ENCODE measurements at regions of chr19 and their contacts with region 1.

Region 1: DNA sequence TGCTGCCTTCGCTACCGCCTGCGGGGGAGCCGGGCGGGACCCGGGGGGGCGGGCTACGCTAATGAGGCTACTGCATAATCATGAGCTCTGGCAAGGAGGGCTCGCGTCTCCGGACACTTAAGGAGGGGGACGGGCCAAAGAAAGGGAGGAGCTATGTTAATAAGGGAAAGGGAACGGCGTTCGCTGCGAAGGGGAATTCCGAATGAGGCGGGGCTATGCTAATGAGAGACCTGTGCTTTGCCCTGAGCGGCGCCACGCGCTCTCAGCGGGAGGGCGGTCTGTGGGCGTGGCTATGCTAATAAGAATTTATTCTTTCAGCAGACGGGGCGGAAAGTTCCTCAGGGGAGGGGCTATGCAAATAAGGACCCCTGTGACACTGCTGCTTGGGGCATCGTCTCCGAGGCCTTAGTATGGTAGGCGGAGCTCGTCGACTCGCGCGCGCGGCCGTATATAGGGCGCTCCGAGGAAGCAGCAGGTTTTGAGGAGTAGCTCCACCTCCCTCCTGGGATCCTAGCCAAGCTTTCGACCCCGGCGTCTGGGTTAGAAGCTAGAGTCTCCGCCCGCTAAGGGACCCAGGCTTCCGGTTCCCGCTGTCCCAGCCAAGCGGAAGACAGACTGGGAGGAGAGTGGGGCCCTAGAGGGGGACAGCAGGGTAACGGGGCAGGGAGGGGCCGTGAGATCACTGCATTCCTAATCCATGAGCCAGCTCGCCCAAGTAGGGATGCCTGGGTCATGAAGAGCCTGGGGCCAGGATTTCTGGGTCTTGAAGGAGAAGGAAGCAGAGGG is at the start of gene RRAS:
- DNase-seq: peak; percentile 96
- ATAC-seq: peak; percentile 73
- H3K4me3 Mint-ChIP-seq: peak within 1 kb of the TSS; percentile 94
- H3K27ac Mint-ChIP-seq: peak within 1 kb of the TSS; percentile 98
- H3K4me1 Mint-ChIP-seq: peaks cover 44% of the 10 kb centered on the region
- H3K27me3 Mint-ChIP-seq: peaks cover 18% of the 10 kb centered on the region
- total RNA-seq, gene RRAS: 12.3 to 14.9 TPM

Region 2: GRCh38 chr19:49580264-49581006 is 59.9 kb before region 1 on chr19 and contains the start of gene NOSIP:
- POLR2A ChIA-PET with region 1: interaction called, 13 read pairs
- DNase-seq: peak; percentile 93
- ATAC-seq: peak; percentile 91
- H3K4me3 Mint-ChIP-seq: peak within 1 kb of the TSS; percentile 88
- H3K27ac Mint-ChIP-seq: peak within 1 kb of the TSS; percentile 89
- H3K4me1 Mint-ChIP-seq: peaks cover 25% of the 10 kb centered on the region
- H3K27me3 Mint-ChIP-seq: no peaks in the 10 kb centered on the region
- total RNA-seq, gene NOSIP: 122 to 125 TPM

Region 3: DNA sequence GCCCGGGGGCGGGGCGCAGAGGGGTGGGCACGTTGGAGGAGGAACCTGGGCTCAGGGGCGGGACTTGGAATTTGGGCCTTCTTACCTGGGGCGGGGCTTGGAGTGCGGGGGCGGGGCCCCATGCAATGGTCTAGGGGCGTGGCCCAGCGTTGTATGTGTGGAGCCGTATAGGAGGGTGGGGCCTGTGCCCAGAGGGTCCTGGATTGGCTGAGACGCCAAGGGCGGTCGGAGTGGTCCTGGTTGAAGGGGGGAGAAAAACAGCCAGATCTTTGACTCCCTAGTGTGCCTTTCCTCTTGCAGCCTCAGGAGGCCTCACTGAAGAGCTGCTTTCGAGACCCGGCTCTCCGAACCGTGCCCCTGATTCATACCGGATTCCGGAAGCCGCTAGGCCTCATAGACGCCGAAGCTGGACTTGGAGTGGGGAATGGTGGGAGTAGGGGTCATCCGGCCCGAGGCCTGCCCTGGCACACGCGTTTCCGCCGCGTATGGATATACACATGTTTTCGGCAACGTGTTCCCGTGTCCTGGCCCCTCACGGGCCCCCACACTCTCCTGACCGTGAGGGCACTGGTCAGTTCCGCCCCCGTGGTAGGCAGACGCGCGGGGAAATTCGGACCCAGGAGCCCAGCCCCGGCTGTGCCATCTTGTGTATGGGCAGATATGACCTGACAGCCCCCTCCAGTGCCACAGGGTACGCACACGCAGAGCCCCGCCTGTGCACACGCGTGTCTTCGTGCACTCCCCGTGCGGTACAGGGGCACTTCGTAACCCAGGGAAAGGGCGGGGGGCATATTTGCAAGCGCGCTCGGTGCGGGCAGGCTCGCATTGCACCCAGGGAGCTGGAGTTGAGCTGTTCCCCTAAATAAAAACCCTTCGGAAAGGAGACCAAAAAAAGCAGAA is 50.0 kb before region 1 on chr19:
- POLR2A ChIA-PET with region 1: interaction called, 68 read pairs
- DNase-seq: peak; percentile 97
- ATAC-seq: peak; percentile 85
- H3K4me3 Mint-ChIP-seq: peak overlapping the region; percentile 91
- H3K27ac Mint-ChIP-seq: peak overlapping the region; percentile 88
- H3K4me1 Mint-ChIP-seq: peaks cover 30% of the 10 kb centered on the region
- H3K27me3 Mint-ChIP-seq: peaks cover 4% of the 10 kb centered on the region

Region 4: GRCh38 chr19:49665351-49666119 is 25.2 kb after region 1 on chr19 and contains the starts of genes BCL2L12 and IRF3:
- POLR2A ChIA-PET with region 1: interaction called, 46 read pairs
- DNase-seq: peak; percentile 98
- ATAC-seq: peak; percentile 84
- H3K4me3 Mint-ChIP-seq: peak within 1 kb of the TSS; percentile 94
- H3K27ac Mint-ChIP-seq: peak within 1 kb of the TSS; percentile 93
- H3K4me1 Mint-ChIP-seq: peaks cover 25% of the 10 kb centered on the region
- H3K27me3 Mint-ChIP-seq: no peaks in the 10 kb centered on the region
- total RNA-seq, gene BCL2L12: 63.4 to 71.3 TPM
- total RNA-seq, gene IRF3: 198 to 205 TPM

Region 5: GRCh38 chr19:49676690-49677231 is 36.5 kb after region 1 on chr19:
- POLR2A ChIA-PET with region 1: interaction called, 15 read pairs
- DNase-seq: peak; percentile 94
- ATAC-seq: peak; percentile 77
- H3K4me3 Mint-ChIP-seq: peak overlapping the region; percentile 99
- H3K27ac Mint-ChIP-seq: peak overlapping the region; percentile 97
- H3K4me1 Mint-ChIP-seq: peaks cover 25% of the 10 kb centered on the region
- H3K27me3 Mint-ChIP-seq: no peaks in the 10 kb centered on the region

Measured in activated naive CD8-positive, alpha-beta T cell treated with anti-CD3 and anti-CD28 coated beads, Interleukin-2, amount 10 ng/mL, durations not matched to agents 7 days and 5 days (primary cell).